Activated naive CD8-positive, alpha-beta T cell treated with anti-CD3 and anti-CD28 coated beads, Interleukin-2, amount 10 ng/mL, durations not matched to agents 7 days and 5 days (primary cell): ENCODE measurements at regions of chr5 and their contacts with region 1.

Region 1: GRCh38 chr5:65481635-65482295 is at the start of gene ADAMTS6:
- DNase-seq: peak; percentile 73
- ATAC-seq: peak; percentile 90
- H3K4me3 Mint-ChIP-seq: no peak within 1 kb of the TSS
- H3K27ac Mint-ChIP-seq: peak within 1 kb of the TSS; percentile 97
- H3K4me1 Mint-ChIP-seq: peaks cover 14% of the 10 kb centered on the region
- H3K27me3 Mint-ChIP-seq: no peaks in the 10 kb centered on the region
- total RNA-seq, gene ADAMTS6: 3.7 to 4.3 TPM

Region 2: DNA sequence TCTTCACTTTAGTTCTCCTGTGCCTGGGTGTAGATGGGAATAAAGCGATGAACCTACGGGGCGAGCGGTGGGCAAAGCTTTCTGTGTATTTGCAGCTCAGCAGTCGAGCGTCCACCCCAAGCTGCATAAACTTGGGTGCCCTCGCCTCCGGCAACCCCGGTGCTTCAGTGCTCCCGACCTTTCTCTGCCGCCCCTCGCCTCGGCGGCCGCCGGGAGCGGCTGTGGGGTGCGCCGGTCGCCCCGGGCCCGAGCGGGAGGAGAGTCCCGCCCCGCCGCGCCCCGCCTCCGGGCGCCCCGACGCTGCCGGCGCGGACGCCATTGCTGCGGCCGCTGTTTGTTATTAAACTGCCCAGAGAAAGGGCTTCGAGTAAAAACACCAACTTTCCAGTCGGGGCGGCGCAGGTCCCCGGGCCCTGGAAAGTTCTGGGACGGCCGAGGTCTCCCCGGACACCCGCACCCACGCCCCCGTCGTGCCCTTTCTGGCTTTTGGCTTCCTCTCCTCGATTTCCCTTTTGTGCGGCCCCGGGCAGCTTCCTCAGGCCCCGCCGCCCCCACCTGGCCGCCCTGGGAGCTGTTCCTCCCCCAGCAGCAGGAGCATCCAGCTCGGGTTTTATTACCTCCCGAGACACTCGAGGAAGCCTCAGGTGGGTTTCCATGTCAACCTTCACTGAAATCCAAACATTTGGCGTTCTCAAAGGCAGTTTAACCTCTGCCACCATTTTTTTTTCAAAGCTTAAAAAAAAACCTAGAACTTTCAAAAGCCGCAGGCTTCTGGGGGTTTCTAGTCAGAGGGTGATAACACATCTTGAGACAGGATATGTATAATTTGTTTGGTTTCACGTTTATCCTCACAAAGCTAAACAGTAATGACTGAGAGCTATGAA is 378.7 kb before region 1 on chr5:
- POLR2A ChIA-PET with region 1: interaction called, 20 read pairs
- DNase-seq: peak; percentile 72
- ATAC-seq: peak; percentile 76
- H3K4me3 Mint-ChIP-seq: peak overlapping the region; percentile 80
- H3K27ac Mint-ChIP-seq: peak overlapping the region; percentile 79
- H3K4me1 Mint-ChIP-seq: peaks cover 36% of the 10 kb centered on the region
- H3K27me3 Mint-ChIP-seq: no peaks in the 10 kb centered on the region

Region 3: DNA sequence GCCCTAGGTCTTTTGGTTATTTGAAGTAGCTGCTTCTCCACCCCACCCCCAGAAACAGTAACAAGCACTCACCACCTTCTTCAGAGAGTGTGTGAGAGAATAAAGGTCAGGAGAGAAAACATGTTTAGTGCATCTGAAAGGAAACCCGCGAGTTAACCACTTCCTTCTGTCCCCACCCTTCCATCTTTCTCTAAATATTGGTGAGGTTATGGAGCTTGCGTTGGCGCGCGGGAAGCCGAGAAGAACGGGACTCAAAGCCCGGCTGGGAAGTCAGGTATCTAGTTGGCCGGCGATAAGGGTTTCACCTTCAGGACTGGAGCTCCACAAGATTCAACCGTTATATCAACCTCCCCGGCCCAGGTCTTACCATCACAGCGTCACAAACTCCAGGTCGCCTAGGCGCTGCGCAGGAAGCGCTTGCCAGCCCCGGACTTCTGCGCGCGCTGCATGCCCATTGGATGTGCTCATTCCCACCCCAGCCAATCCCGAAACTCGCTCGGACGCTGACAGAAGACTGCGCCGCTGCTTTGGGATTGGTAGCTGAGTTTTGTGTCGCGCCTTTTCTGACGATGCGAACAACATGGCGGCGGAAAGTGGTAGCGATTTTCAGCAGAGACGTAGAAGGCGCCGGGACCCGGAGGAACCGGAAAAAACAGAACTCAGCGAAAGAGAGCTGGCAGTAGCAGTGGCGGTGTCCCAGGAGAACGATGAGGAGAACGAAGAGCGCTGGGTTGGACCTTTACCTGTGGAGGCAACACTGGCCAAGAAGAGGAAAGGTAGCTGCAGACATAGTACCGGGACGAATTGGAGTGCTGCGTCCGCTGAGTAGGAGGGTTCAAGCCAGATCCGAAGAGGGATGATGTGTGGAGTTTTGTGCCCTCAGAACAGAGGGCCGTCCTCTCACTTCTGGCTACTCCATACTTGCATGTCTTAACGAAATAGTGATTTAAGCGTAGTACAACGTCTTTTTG is 81.3 kb after region 1 on chr5 and contains the starts of genes CENPK and PPWD1:
- POLR2A ChIA-PET with region 1: interaction called, 17 read pairs
- DNase-seq: peak; percentile 92
- ATAC-seq: peak; percentile 98
- H3K4me3 Mint-ChIP-seq: peak within 1 kb of the TSS; percentile 96
- H3K27ac Mint-ChIP-seq: peak within 1 kb of the TSS; percentile 99
- H3K4me1 Mint-ChIP-seq: peaks cover 46% of the 10 kb centered on the region
- H3K27me3 Mint-ChIP-seq: no peaks in the 10 kb centered on the region
- total RNA-seq, gene CENPK: 89.9 to 90.7 TPM
- total RNA-seq, gene PPWD1: 72.7 to 78.6 TPM